Activated T-helper 1 cell treated with anti-CD3 and anti-CD28 coated beads, Interleukin-12 subunit alpha, Interleukin-12 subunit beta, Interleukin-2, Interleukin-4 antibody, amounts not matched to agents 30 ng/mL and 10 ng/mL and 1 ng/mL, durations not matched to agents 14 hours and 24 hours and 36 hours (primary cell): ENCODE measurements at regions of chr19 and their contacts with region 1.

Region 1: GRCh38 chr19:21328885-21329605 is at the start of gene ZNF708:
- DNase-seq: peak; percentile 78
- H3K4me3 Mint-ChIP-seq: peak within 1 kb of the TSS; percentile 96
- H3K27ac Mint-ChIP-seq: peak within 1 kb of the TSS; percentile 98
- H3K4me1 Mint-ChIP-seq: peaks cover 13% of the 10 kb centered on the region
- H3K27me3 Mint-ChIP-seq: no peaks in the 10 kb centered on the region
- total RNA-seq, gene ZNF708: 9.6 and 9.9 TPM in 2 replicates

Region 2: GRCh38 chr19:21020298-21021227 is 308.5 kb before region 1 on chr19 and contains the start of gene ZNF430:
- intact Hi-C with region 1: loop called (anchors 1 kb)
- DNase-seq: peak; percentile 93
- H3K4me3 Mint-ChIP-seq: peak within 1 kb of the TSS; percentile 99
- H3K27ac Mint-ChIP-seq: peak within 1 kb of the TSS; percentile 98
- H3K4me1 Mint-ChIP-seq: peaks cover 26% of the 10 kb centered on the region
- H3K27me3 Mint-ChIP-seq: peaks cover 2% of the 10 kb centered on the region
- total RNA-seq, gene ZNF430: 20.3 and 21.5 TPM in 2 replicates

Region 3: GRCh38 chr19:21141787-21142464 is 187.1 kb before region 1 on chr19 and contains the start of gene ZNF431:
- intact Hi-C with region 1: loop called (anchors 1 kb)
- DNase-seq: peak; percentile 85
- H3K4me3 Mint-ChIP-seq: peak within 1 kb of the TSS; percentile 96
- H3K27ac Mint-ChIP-seq: peak within 1 kb of the TSS; percentile 91
- H3K4me1 Mint-ChIP-seq: peaks cover 25% of the 10 kb centered on the region
- H3K27me3 Mint-ChIP-seq: no peaks in the 10 kb centered on the region
- total RNA-seq, gene ZNF431: 16.0 and 16.8 TPM in 2 replicates

Region 4: GRCh38 chr19:21358768-21359451 is 29.9 kb after region 1 on chr19 and contains the start of gene ZNF738:
- intact Hi-C with region 1: loop called (anchors 1 kb)
- DNase-seq: peak; percentile 77
- H3K4me3 Mint-ChIP-seq: peak within 1 kb of the TSS; percentile 100
- H3K27ac Mint-ChIP-seq: peak within 1 kb of the TSS; percentile 97
- H3K4me1 Mint-ChIP-seq: no peaks in the 10 kb centered on the region
- H3K27me3 Mint-ChIP-seq: no peaks in the 10 kb centered on the region
- total RNA-seq, gene ZNF738: 9.7 and 11.7 TPM in 2 replicates

Region 5: DNA sequence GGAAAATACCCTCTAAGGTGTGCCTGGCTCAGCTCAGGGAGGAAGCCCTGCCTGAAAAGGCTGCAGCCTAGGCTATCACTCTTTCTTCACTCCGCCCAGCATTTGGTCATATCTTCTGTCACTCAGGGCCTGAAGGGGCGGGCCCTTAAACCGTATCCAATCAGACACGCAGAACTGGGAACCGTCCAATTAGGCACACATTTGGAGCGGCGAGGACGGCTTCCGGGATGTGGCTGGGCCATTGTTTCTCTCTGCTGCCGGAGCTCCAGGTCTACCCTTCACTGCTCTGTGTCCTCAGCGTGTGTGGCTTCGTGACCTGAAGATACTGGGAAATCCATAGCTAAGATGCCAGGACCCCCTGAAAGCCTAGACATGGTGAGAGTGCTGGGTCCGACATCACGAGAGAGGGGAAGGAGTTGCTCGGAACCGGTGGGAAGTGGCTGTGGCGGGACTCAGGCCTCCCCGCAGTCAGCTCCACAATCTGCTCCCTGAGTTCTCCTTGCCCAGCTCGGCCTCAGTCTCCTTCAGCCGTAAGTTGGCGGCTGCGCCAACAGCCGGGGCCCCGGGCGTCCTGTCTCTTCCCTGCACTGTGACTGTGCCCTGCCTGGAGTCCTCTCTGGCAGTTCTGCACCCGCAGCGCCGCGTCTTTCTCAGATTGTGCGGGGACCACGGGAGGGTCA is 68.0 kb after region 1 on chr19 and contains the start of gene ZNF493:
- intact Hi-C with region 1: loop called (anchors 1 kb)
- DNase-seq: peak; percentile 87
- H3K4me3 Mint-ChIP-seq: peak within 1 kb of the TSS; percentile 97
- H3K27ac Mint-ChIP-seq: peak within 1 kb of the TSS; percentile 83
- H3K4me1 Mint-ChIP-seq: peaks cover 14% of the 10 kb centered on the region
- H3K27me3 Mint-ChIP-seq: no peaks in the 10 kb centered on the region
- total RNA-seq, gene ZNF493: 9.6 and 12.6 TPM in 2 replicates

Region 6: DNA sequence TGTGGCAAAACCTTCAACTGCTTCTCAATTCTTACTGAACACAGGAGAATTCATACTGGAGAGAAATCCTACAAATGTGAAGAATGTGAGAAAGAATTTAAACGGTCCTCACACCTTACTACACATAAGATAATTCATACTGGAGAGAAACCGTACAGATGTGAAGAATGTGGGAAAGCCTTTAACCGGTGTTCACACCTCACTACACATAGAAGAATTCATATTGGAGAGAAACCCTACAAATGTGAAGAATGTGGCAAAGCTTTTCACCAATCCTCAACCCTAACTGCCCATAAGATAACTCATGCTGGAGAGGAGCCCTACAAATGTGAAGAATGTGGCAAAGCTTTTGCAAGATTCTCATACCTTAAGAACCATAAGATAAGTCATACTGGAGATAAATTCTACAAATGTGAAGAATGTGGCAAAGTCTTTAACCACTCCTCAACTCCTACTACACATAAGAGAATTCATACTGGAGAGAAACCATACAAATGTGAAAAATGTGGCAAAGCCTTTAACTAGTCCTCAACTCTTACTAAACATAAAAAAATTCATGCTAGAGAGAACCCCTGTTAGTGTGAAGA is 326.6 kb after region 1 on chr19:
- intact Hi-C with region 1: no loop called
- DNase-seq: no peak
- H3K4me3 Mint-ChIP-seq: no peak overlapping the region
- H3K27ac Mint-ChIP-seq: no peak overlapping the region
- H3K4me1 Mint-ChIP-seq: no peaks in the 10 kb centered on the region
- H3K27me3 Mint-ChIP-seq: no peaks in the 10 kb centered on the region

Region 7: GRCh38 chr19:21835810-21836444 is 506.9 kb after region 1 on chr19 and contains the start of gene ZNF43:
- intact Hi-C with region 1: loop called (anchors 1 kb)
- DNase-seq: peak; percentile 87
- H3K4me3 Mint-ChIP-seq: peak within 1 kb of the TSS; percentile 98
- H3K27ac Mint-ChIP-seq: peak within 1 kb of the TSS; percentile 98
- H3K4me1 Mint-ChIP-seq: peaks cover 2% of the 10 kb centered on the region
- H3K27me3 Mint-ChIP-seq: peaks cover 2% of the 10 kb centered on the region
- total RNA-seq, gene ZNF43: 29.9 and 30.5 TPM in 2 replicates

Region 8: GRCh38 chr19:22052644-22053013 is 723.6 kb after region 1 on chr19:
- intact Hi-C with region 1: loop called (anchors 5 kb)
- DNase-seq: no peak
- H3K4me3 Mint-ChIP-seq: peak overlapping the region; percentile 92
- H3K27ac Mint-ChIP-seq: peak overlapping the region; percentile 57
- H3K4me1 Mint-ChIP-seq: no peaks in the 10 kb centered on the region
- H3K27me3 Mint-ChIP-seq: no peaks in the 10 kb centered on the region